ENCODE measurements at regions of chr18 and their contacts with region 1.

Region 1: GRCh38 chr18:3665780-3666525 is 216.0 kb downstream of the TGIF1 start:
- DNase-seq: peak; percentile 68 to 80 (median 77)
- H3K4me3 ChIP-seq: peak overlapping the region in 1 of 3 experiments; percentile 54
- H3K4me3 Mint-ChIP-seq: peak overlapping the region; percentile 71 to 89
- H3K27ac ChIP-seq: no peak overlapping the region
- H3K27ac Mint-ChIP-seq: peak overlapping the region in 4 of 7 donors; percentile 21 to 61 (median 50)
- H3K4me1 ChIP-seq: peaks cover 33 to 42% of the 10 kb centered on the region in 2 donors
- H3K4me1 Mint-ChIP-seq: peaks cover 36% of the 10 kb centered on the region
- H3K27me3 ChIP-seq: no peaks in the 10 kb centered on the region
- H3K27me3 Mint-ChIP-seq: peaks cover 0 to 3% (median 0%) of the 10 kb centered on the region in 3 donors
- CTCF ChIP-seq: peak; percentile 96

Region 2: GRCh38 chr18:3281456-3282400 is 384.2 kb before region 1 on chr18:
- intact Hi-C with region 1: loop called (anchors 2 to 5 kb)
- DNase-seq: peak; percentile 57 to 90 (median 68)
- H3K4me3 ChIP-seq: no peak overlapping the region
- H3K4me3 Mint-ChIP-seq: no peak overlapping the region
- H3K27ac ChIP-seq: no peak overlapping the region
- H3K27ac Mint-ChIP-seq: no peak overlapping the region
- H3K4me1 ChIP-seq: peaks cover 17 to 25% of the 10 kb centered on the region in 2 donors
- H3K4me1 Mint-ChIP-seq: peaks cover 32% of the 10 kb centered on the region
- H3K27me3 ChIP-seq: no peaks in the 10 kb centered on the region
- H3K27me3 Mint-ChIP-seq: peaks cover 0 to 4% (median 0%) of the 10 kb centered on the region in 3 donors
- CTCF ChIP-seq: peak; percentile 82

Region 3: GRCh38 chr18:3794537-3795348 is 128.8 kb after region 1 on chr18:
- intact Hi-C with region 1: no loop called
- DNase-seq: peak in 1 of 3 donors; percentile 15
- H3K4me3 ChIP-seq: no peak overlapping the region
- H3K4me3 Mint-ChIP-seq: no peak overlapping the region
- H3K27ac ChIP-seq: no peak overlapping the region
- H3K27ac Mint-ChIP-seq: no peak overlapping the region
- H3K4me1 ChIP-seq: peaks cover 5 to 7% of the 10 kb centered on the region in 2 donors
- H3K4me1 Mint-ChIP-seq: peaks cover 4% of the 10 kb centered on the region
- H3K27me3 ChIP-seq: no peaks in the 10 kb centered on the region
- H3K27me3 Mint-ChIP-seq: peaks cover 7 to 11% (median 8%) of the 10 kb centered on the region in 3 donors
- CTCF ChIP-seq: no peak